ENCODE measurements at regions of chr10 and their contacts with region 1.

Region 1: GRCh38 chr10:6637053-6637452 is 57.0 kb upstream of the PRKCQ start:
- DNase-seq: no peak
- ATAC-seq: no peak
- H3K4me3 ChIP-seq: no peak overlapping the region
- H3K4me3 Mint-ChIP-seq: no peak overlapping the region
- H3K27ac ChIP-seq: no peak overlapping the region
- H3K27ac Mint-ChIP-seq: peak overlapping the region in 1 of 2 donors; percentile 16
- H3K4me1 ChIP-seq: no peaks in the 10 kb centered on the region
- H3K4me1 Mint-ChIP-seq: peaks cover 21 to 31% (median 25%) of the 10 kb centered on the region in 3 donors
- H3K27me3 ChIP-seq: no peaks in the 10 kb centered on the region
- H3K27me3 Mint-ChIP-seq: no peaks in the 10 kb centered on the region

Region 2: DNA sequence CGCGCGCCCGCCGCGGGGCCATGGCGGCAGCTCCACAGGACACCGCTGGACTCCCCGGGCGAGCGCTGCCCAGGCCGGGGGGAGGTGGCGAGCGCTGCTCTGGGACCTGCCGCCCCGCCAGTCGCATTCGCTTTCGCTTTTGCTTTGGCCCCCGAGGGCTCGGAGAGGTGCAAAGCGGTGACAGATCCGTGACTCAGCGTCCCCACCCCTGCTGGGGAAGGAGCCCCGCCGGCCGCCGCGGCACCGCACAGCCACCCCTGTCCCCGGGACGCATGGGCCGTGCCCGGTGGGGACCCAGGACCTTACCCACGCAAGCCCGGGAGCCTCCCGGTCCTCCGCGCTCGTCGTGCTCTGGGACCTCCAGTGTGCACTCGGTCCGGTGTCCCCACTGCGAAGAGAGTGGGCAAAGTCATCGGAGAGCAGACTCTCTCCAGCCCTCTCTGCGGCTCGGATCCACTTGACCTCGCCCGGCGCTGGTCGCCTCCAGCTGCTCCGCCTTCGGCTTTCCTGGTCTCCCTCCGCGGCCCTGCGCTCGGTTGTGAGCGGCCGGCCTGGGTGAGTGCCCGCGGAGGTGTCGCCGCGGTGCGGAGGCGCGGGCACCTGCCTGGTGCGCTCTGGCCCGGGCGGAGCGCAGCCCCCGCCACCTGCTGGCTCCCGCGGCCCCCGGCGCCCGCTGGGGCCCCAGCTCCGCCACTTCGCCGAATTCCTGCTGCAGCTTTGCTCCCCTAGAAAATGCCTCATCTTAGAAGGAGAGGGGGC is 659.4 kb before region 1 on chr10 and contains the start of gene IL15RA:
- CTCF ChIA-PET with region 1: no interaction called
- POLR2A ChIA-PET with region 1: no interaction called
- DNase-seq: peak; percentile 54 to 88 (median 73)
- ATAC-seq: peak; percentile 80 to 88 (median 84)
- H3K4me3 ChIP-seq: peak within 1 kb of the TSS; percentile 92 to 98
- H3K4me3 Mint-ChIP-seq: peak within 1 kb of the TSS; percentile 90 to 95 (median 93)
- H3K27ac ChIP-seq: peak within 1 kb of the TSS; percentile 84
- H3K27ac Mint-ChIP-seq: peak within 1 kb of the TSS; percentile 92 to 94
- H3K4me1 ChIP-seq: peaks cover 7 to 24% of the 10 kb centered on the region in 2 experiments
- H3K4me1 Mint-ChIP-seq: peaks cover 18 to 31% (median 30%) of the 10 kb centered on the region in 3 donors
- H3K27me3 ChIP-seq: no peaks in the 10 kb centered on the region
- H3K27me3 Mint-ChIP-seq: no peaks in the 10 kb centered on the region
- total RNA-seq, gene IL15RA: 10.1 to 18.2 (median 10.8) TPM

Region 3: DNA sequence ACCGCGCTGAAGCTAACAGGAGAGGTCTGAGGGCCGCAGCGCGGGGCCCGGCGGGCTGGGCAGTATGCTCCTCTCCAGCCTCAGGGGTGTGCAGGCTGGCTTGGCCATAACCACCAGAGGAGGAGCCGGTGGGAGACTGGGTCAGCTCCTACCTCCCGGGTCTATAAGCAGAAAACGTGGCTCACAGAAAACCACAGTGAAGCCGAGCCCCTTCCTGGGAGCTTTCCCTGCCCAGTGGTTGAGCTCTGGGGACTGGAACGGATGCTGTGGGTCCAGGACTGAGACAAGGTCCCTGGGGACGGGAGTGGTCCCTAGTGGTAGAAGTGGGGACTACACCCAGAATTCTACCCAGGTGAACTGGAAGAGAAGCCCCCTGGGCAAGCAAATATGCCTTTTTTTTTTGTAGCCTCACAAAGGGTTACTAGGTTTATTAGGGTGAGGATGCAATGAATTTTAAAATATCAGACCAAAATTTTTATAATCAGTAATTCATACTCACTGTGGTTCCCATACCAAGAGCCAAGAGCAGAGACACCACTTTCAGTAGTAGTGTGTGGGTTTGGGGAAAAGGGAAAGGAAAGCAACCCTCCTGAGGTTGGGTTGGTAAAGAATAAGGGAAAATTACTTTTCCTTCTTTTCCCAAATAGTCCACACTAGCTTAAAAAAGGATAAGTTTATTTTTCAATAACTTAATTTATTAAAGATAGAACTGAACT is 10.9 kb after region 1 on chr10:
- CTCF ChIA-PET with region 1: no interaction called
- POLR2A ChIA-PET with region 1: interaction called in 1 of 2 experiments, 10 read pairs
- DNase-seq: peak in 34 of 35 experiments; percentile 26 to 84 (median 54)
- ATAC-seq: peak; percentile 87 to 96 (median 90)
- H3K4me3 ChIP-seq: no peak overlapping the region
- H3K4me3 Mint-ChIP-seq: no peak overlapping the region
- H3K27ac ChIP-seq: no peak overlapping the region
- H3K27ac Mint-ChIP-seq: no peak overlapping the region
- H3K4me1 ChIP-seq: peaks cover 10 to 11% of the 10 kb centered on the region in 2 experiments
- H3K4me1 Mint-ChIP-seq: peaks cover 17 to 29% (median 19%) of the 10 kb centered on the region in 3 donors
- H3K27me3 ChIP-seq: no peaks in the 10 kb centered on the region
- H3K27me3 Mint-ChIP-seq: peaks cover 0 to 2% of the 10 kb centered on the region in 2 donors